ENCODE measurements at regions of chr7 and their contacts with region 1.

Region 1: GRCh38 chr7:111741811-111742240 is 179.5 kb upstream of the IMMP2L start:
- DNase-seq: peak in 1 of 5 donors; percentile 46
- ATAC-seq: peak; percentile 42 to 78 (median 68)
- H3K4me3 ChIP-seq: no peak overlapping the region
- H3K27ac ChIP-seq: no peak overlapping the region
- H3K4me1 ChIP-seq: peaks cover 0 to 7% (median 0%) of the 10 kb centered on the region in 12 donors
- H3K27me3 ChIP-seq: no peaks in the 10 kb centered on the region
- CTCF ChIP-seq: peak; percentile 47 to 75 (median 60)
- POLR2A ChIP-seq: no peak

Region 2: DNA sequence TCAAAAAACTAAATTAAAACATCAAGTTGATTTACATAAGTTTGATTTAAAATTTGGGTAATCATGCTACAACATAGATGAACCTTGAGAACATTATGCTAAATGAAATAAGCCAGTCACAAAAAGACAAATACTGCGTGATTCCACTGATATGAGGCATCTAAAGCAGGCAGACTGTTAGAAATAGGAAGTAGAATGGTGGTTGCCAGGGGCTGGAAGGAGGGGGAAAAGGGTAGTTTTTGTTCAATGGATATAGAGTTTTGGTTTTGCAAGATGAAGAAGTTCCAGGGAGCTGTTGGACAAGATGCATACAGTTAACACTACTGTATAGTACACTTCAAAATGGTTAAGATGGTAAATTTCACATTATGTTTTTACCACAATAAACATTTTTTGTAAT is 663.5 kb after region 1 on chr7:
- intact Hi-C with region 1: loop called in 2 of 10 experiments (anchors 5 kb)
- DNase-seq: no peak
- ATAC-seq: no peak
- H3K4me3 ChIP-seq: no peak overlapping the region
- H3K27ac ChIP-seq: no peak overlapping the region
- H3K4me1 ChIP-seq: no peaks in the 10 kb centered on the region
- H3K27me3 ChIP-seq: no peaks in the 10 kb centered on the region
- CTCF ChIP-seq: no peak
- POLR2A ChIP-seq: no peak

Measured in heart left ventricle (tissue), 16 donors.